ENCODE measurements at regions of chr12 and their contacts with region 1.

Region 1: DNA sequence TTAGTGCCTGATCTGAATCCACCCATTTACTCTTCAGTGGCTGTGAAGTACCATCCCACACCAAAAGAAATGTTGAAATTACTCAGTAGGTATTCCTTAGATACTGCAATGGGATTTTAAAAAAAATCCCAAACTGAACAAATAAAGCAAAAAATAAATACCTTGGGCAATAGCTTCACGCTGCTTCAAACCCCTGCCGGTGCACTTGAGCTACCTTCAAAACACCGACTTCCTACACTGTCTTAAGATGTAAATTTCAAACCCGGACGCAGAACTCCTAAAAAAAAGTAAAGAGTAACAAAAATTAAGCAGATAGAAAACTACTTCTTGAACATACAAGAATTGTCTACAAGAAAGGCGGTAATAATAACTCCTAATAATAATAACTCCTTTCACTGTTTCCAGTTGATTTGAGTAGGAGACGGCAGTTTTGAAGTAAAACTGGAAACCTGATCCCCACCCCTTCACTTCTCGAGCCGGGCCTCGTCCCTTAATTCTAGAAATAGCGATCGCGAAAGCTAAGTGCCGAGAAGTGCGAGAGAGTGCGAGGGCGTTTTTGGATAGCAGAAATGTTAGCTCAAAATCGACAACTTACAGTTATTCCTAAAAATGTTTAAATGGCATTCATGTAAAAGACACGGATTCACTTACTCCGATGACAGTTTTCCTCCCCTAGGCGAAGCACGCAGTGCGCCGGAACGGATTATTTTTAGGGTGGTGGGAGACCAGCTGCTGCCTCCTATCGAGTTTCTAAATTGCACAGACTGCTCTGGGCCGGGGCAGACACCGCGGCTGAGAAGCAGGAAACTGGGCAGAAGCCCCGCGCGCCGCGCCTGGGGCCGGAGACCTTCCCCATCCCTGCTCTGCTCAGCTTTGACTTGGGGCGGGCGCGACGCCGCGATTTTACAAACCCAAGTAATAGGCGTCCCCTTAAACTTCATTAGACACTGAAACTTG is at the start of gene ABCC9:
- DNase-seq: peak; percentile 81
- H3K4me3 ChIP-seq: peak within 1 kb of the TSS; percentile 45 to 61 (median 59)
- H3K27ac ChIP-seq: peak within 1 kb of the TSS; percentile 81 to 89 (median 86)
- H3K4me1 ChIP-seq: peaks cover 0 to 17% (median 14%) of the 10 kb centered on the region in 4 donors
- H3K27me3 ChIP-seq: no peaks in the 10 kb centered on the region
- CTCF ChIP-seq: no peak
- EP300 ChIP-seq: no peak
- POLR2A ChIP-seq: peak; percentile 29 to 33
- total RNA-seq, gene ABCC9: 28.2 to 39.2 (median 34.0) TPM

Region 2: DNA sequence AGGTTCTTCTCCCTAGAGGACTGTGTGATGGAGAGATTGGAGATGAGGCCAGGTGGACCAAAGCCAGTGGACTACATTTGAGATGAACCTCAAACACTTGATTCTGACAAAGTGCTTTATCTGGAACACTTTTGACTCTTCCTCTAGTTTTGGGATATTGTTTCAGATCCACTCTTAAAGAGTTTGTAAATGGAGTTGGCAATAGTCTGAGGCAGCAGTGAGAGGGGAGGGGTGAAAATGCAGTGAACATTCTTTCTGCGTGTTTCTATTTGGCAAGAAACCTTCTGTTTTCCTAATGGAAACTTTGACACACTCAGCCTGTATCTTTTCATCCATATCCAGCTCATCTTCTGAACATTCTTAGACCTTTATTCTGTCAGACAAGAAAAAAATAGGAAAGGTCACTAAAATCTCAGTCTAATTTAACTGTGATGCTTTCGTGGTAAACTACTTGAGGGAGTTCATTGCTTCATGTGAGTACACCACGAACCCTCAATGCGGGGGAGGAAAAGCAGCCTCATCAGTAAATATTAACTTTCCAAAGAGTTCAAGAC is 109.0 kb before region 1 on chr12:
- intact Hi-C with region 1: loop called (anchors 5 kb)
- DNase-seq: peak; percentile 89
- H3K4me3 ChIP-seq: no peak overlapping the region
- H3K27ac ChIP-seq: peak overlapping the region; percentile 59 to 74 (median 68)
- H3K4me1 ChIP-seq: peaks cover 0 to 53% (median 28%) of the 10 kb centered on the region in 4 donors
- H3K27me3 ChIP-seq: no peaks in the 10 kb centered on the region
- CTCF ChIP-seq: no peak
- EP300 ChIP-seq: peak in 1 of 4 donors; percentile 54
- POLR2A ChIP-seq: no peak

Region 3: GRCh38 chr12:21891751-21892217 is 49.0 kb before region 1 on chr12:
- intact Hi-C with region 1: loop called (anchors 5 kb)
- DNase-seq: peak; percentile 93
- H3K4me3 ChIP-seq: no peak overlapping the region
- H3K27ac ChIP-seq: peak overlapping the region; percentile 73 to 82 (median 76)
- H3K4me1 ChIP-seq: peaks cover 0 to 65% (median 49%) of the 10 kb centered on the region in 4 donors
- H3K27me3 ChIP-seq: no peaks in the 10 kb centered on the region
- CTCF ChIP-seq: no peak
- EP300 ChIP-seq: peak; percentile 7 to 57 (median 34)
- POLR2A ChIP-seq: no peak

Region 4: DNA sequence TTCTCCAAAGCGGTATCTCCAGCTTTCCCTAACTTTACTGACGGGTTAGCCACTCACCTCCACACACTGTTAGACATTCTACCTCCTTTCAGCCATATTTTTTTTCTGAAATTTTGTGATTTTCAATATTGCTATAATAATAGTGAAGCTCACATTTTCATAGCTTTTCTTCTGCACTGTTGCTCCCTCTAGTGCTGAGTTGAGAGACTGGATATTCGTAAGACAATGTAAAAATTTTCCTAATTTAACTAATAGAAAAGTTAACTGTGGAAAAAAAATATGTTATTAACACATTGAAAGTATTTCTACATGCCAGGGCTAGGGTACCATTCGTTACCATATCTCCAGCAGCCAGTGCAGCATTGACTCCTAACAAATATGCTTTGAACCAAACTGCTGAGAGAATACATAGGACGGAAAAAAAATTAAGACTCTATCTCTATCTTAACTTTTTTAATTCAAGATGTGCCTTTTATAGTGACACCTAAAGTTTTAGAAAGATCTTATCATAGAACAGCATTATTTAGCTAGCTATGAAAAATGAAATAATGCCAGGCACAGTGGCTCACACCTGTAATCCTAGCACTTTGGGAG is 49.1 kb after region 1 on chr12:
- intact Hi-C with region 1: loop called (anchors 10 kb)
- DNase-seq: no peak
- H3K4me3 ChIP-seq: no peak overlapping the region
- H3K27ac ChIP-seq: no peak overlapping the region
- H3K4me1 ChIP-seq: no peaks in the 10 kb centered on the region
- H3K27me3 ChIP-seq: no peaks in the 10 kb centered on the region
- CTCF ChIP-seq: peak; percentile 45 to 62 (median 56)
- EP300 ChIP-seq: no peak
- POLR2A ChIP-seq: no peak

Region 5: GRCh38 chr12:22231836-22232235 is 291.0 kb after region 1 on chr12:
- intact Hi-C with region 1: no loop called
- DNase-seq: no peak
- H3K4me3 ChIP-seq: no peak overlapping the region
- H3K27ac ChIP-seq: no peak overlapping the region
- H3K4me1 ChIP-seq: peaks cover 0 to 22% (median 16%) of the 10 kb centered on the region in 4 donors
- H3K27me3 ChIP-seq: no peaks in the 10 kb centered on the region
- CTCF ChIP-seq: no peak
- EP300 ChIP-seq: no peak
- POLR2A ChIP-seq: no peak

Measured in sigmoid colon (tissue), 7 donors.